Astrocyte of the cerebellum (primary cell): ENCODE measurements at regions of chr5 and their contacts with region 1.

Region 1: DNA sequence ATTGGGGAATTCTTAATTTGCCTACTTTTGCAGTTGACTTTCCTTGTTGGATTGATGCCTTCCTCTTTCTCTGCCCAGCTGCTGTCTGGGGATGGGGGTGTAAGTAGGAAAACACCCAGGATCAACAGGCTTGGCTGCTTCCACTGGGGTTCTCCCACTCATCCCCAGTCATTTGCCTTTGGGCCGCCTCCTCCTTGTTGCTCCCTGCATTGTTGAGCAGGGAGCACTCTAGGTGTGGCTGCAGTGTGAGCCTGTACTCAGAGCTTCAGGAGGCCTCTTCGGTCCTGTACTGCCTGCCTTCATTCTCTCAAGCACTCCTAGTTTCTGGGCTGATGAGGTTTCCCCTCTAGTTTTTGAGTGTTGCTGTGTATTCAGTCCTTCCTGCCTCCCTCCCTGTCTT is 12.1 kb downstream of the RHOBTB3 start:
- DNase-seq: no peak
- H3K4me3 ChIP-seq: no peak overlapping the region
- CTCF ChIP-seq: no peak

Region 2: DNA sequence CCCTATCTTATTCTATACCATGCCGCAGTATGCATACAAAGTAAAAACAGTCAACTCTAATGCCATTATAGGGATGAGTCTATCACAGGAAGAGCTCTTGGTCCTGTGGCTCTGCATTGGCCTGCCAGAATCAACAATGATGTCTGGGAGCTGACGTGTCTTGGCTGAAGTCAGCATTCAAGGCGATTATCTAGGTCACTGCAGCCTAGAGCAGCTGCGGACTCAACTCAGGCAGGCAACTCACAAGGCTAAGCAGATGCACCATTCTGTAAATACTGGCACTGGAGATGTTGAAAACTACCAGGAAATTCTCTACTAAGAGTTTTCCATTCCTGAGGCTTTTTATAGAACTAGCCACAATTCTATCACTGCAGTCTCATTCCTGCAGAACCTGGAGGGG is 73.7 kb before region 1 on chr5:
- in situ Hi-C with region 1: loop called (anchors 5 kb)
- DNase-seq: peak; percentile 89
- H3K4me3 ChIP-seq: no peak overlapping the region
- CTCF ChIP-seq: no peak

Region 3: GRCh38 chr5:95686651-95687050 is 56.6 kb before region 1 on chr5:
- in situ Hi-C with region 1: no loop called
- DNase-seq: no peak
- H3K4me3 ChIP-seq: no peak overlapping the region
- CTCF ChIP-seq: no peak